Breast epithelium (tissue), 4 donors: ENCODE measurements at regions of chr18 and their contacts with region 1.

Region 1: GRCh38 chr18:23337599-23338444 is 115.3 kb upstream of the RIOK3 start:
- DNase-seq: no peak
- H3K4me3 ChIP-seq: no peak overlapping the region
- H3K27ac ChIP-seq: no peak overlapping the region
- H3K4me1 ChIP-seq: no peaks in the 10 kb centered on the region
- H3K27me3 ChIP-seq: no peaks in the 10 kb centered on the region
- CTCF ChIP-seq: no peak
- POLR2A ChIP-seq: no peak

Region 2: DNA sequence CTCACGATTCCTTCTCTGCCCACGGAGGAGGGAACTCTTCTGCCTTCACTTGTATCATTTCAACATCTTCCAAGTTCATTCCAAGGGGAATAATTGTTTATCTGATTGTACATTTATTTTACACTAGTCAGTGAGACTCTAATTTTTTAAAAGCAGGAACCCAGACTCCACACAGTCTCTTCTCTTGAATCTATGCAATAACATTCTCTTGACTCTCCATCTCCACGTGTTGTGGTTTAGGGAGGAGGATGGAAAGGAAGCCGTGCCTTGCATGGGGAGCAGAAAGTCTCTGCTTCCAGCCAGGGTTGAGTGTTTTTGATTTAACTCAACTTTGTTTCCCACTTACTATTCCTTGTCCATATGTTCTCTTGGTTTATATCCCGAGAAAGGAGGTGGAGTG is 15.8 kb before region 1 on chr18:
- intact Hi-C with region 1: loop called (anchors 2 kb)
- DNase-seq: no peak
- H3K4me3 ChIP-seq: no peak overlapping the region
- H3K27ac ChIP-seq: peak overlapping the region in 1 of 2 donors; percentile 13
- H3K4me1 ChIP-seq: no peaks in the 10 kb centered on the region
- H3K27me3 ChIP-seq: no peaks in the 10 kb centered on the region
- CTCF ChIP-seq: no peak
- POLR2A ChIP-seq: no peak